ENCODE measurements at regions of chr1 and their contacts with region 1.

Region 1: GRCh38 chr1:10687782-10688408 is 108.6 kb downstream of the CASZ1 start:
- DNase-seq: no peak
- H3K4me3 ChIP-seq: no peak overlapping the region
- H3K27ac ChIP-seq: peak overlapping the region; percentile 87 to 98 (median 96)
- H3K4me1 ChIP-seq: peaks cover 0 to 100% (median 100%) of the 10 kb centered on the region in 4 donors
- H3K27me3 ChIP-seq: no peaks in the 10 kb centered on the region
- CTCF ChIP-seq: no peak
- EP300 ChIP-seq: no peak
- POLR2A ChIP-seq: no peak

Region 2: DNA sequence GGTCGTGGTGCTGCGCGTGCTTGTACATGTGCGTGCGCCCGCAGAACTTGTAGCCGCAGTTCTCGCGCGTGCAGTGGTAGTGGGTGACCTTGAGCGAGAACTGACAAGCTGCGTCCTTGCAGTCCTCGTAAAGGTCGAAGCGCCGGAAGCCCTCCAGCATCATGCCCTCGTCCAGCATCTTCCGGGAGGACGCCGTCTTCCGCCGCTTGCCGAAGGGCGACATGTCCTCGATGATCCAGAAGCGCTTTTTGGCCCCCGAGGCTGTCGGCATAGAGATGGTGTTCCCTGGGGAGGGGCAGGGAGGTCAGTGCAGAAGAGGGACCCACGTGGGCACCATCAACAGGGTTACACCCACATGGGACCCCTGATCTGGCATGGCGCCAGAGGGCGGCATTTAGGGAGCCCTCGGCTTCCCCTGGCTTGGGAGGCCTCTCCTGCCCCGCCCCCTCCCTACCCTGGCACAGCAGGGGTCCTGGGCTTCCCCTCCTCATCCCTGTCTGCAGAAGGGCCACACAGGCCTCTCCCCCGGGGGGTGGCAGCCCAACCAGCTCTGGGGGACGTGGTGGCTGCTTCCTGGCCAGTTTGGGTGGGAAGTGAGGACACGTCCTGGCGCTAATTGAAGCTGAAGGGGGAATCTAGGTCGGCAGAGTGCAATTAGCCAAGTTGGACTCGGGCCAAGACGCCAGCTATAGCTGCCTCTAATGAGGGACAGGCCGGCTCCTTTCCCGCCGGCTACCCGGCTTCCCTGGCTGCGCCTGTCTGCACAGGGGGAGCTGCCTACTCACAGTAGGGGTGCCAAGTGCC is 47.9 kb before region 1 on chr1:
- intact Hi-C with region 1: loop called (anchors 2 kb)
- DNase-seq: no peak
- H3K4me3 ChIP-seq: no peak overlapping the region
- H3K27ac ChIP-seq: peak overlapping the region; percentile 60 to 88 (median 81)
- H3K4me1 ChIP-seq: peaks cover 0 to 74% (median 61%) of the 10 kb centered on the region in 4 donors
- H3K27me3 ChIP-seq: peaks cover 0 to 4% (median 0%) of the 10 kb centered on the region in 3 donors
- CTCF ChIP-seq: no peak
- EP300 ChIP-seq: no peak
- POLR2A ChIP-seq: no peak